Left ventricle myocardium superior (tissue), 1 donor: ENCODE measurements at regions of chr17 and their contacts with region 1.

Region 1: GRCh38 chr17:39566094-39566850 is 41.4 kb downstream of the NEUROD2 start:
- DNase-seq: no peak
- ATAC-seq: no peak

Region 2: GRCh38 chr17:39553341-39553945 is 12.8 kb before region 1 on chr17:
- intact Hi-C with region 1: loop called (anchors 2 kb)
- DNase-seq: no peak
- ATAC-seq: no peak